ENCODE measurements at regions of chr5 and their contacts with region 1.

Region 1: GRCh38 chr5:178312880-178313282 is 80.3 kb upstream of the PHYKPL start:
- DNase-seq: peak in 1 of 2 donors; percentile 51
- ATAC-seq: no peak
- H3K4me3 ChIP-seq: no peak overlapping the region
- H3K27ac ChIP-seq: no peak overlapping the region
- H3K4me1 ChIP-seq: no peaks in the 10 kb centered on the region
- H3K27me3 ChIP-seq: no peaks in the 10 kb centered on the region
- CTCF ChIP-seq: no peak

Region 2: DNA sequence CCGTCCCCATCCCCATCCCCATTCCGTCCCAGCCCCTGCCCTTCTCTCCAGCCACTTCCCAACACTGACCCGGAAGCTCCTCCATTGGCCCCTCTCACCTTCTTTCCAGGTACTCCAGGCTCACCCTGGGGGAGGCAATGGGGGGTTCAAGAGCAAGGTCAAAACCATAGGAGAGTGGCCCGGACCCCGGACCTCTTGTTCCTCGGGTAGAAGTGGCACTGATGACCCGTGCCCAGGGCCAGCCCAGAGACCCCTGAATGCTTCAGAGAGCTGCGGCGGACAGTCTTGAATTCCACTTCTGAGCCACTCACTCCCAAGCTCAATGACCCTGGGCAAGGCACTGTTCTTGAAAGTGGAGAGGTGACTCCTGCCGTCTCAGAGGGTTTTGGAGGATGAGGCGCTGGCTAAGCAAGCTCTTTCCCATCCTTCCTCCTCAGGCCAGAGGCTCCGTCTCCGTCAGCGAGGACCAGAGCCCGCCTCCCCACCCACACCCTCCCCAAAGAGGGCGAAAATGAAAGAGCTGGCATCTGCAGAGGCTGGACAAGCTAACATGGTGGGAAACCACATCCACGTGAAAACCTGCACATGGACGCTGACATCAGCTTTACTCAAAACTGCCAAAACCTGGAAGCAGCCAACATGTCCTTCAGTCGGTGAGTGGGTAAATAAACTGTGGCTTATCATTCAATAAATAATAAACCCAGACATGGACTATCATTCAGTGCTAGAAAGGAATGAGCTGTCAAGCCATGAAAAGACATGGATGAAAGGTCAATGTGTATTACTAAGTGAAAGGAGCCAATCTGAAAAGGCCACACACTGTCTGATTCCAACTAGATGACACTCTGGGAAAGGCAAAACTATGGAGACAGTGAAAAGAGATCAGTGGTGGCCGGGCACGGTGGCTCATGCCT is 53.0 kb before region 1 on chr5:
- intact Hi-C with region 1: no loop called
- DNase-seq: no peak
- ATAC-seq: no peak
- H3K4me3 ChIP-seq: no peak overlapping the region
- H3K27ac ChIP-seq: no peak overlapping the region
- H3K4me1 ChIP-seq: no peaks in the 10 kb centered on the region
- H3K27me3 ChIP-seq: no peaks in the 10 kb centered on the region
- CTCF ChIP-seq: no peak

Region 3: GRCh38 chr5:178273665-178274541 is 39.0 kb before region 1 on chr5:
- intact Hi-C with region 1: no loop called
- DNase-seq: peak in 1 of 2 donors; percentile 39
- ATAC-seq: no peak
- H3K4me3 ChIP-seq: no peak overlapping the region
- H3K27ac ChIP-seq: no peak overlapping the region
- H3K4me1 ChIP-seq: no peaks in the 10 kb centered on the region
- H3K27me3 ChIP-seq: peaks cover 0 to 8% (median 4%) of the 10 kb centered on the region in 3 donors
- CTCF ChIP-seq: no peak

Region 4: GRCh38 chr5:178699681-178700253 is 386.9 kb after region 1 on chr5:
- intact Hi-C with region 1: no loop called
- DNase-seq: no peak
- ATAC-seq: no peak
- H3K4me3 ChIP-seq: no peak overlapping the region
- H3K27ac ChIP-seq: no peak overlapping the region
- H3K4me1 ChIP-seq: no peaks in the 10 kb centered on the region
- H3K27me3 ChIP-seq: no peaks in the 10 kb centered on the region
- CTCF ChIP-seq: no peak

Region 5: GRCh38 chr5:179475208-179475751 is 1162.4 kb after region 1 on chr5:
- intact Hi-C with region 1: loop called in 1 of 2 experiments (anchors 10 kb)
- DNase-seq: no peak
- ATAC-seq: no peak
- H3K4me3 ChIP-seq: no peak overlapping the region
- H3K27ac ChIP-seq: no peak overlapping the region
- H3K4me1 ChIP-seq: no peaks in the 10 kb centered on the region
- H3K27me3 ChIP-seq: peaks cover 0 to 4% (median 0%) of the 10 kb centered on the region in 3 donors
- CTCF ChIP-seq: no peak